Kidney (tissue), 22 donors: ENCODE measurements at regions of chr5 and their contacts with region 1.

Region 1: DNA sequence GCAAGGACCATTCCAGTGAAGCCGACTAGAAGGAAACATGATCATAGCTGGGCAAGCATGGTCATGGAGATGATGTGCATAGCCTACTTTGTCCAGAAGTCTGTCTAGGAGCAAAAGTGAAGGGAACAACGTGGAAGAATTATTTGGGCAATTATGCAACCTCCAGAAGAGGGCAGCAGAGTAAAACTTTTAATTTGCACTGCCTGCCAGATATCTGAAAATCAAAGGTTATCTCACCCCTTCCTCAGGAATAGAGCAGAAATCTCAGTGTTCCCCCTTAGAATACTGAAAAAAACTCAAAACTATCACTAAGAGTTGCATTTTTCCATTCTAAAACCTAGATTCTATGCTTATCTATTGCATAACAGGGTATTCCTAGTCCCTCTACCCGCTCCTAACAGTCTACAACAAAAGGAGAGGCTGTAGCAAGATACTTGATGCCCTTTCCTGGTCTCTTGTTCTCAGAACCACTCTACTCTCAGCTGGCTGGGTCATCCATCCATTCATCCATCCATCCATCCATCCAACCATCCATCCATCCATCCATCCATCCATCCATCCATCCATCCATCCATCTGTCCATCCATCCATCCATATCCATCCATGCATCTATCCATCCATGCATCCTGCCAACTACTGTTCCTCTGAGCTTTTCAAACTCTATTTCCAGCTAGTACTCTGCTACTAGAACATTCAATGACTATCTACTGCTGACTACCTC is 8.4 kb upstream of the SETD9 start:
- DNase-seq: peak in 3 of 5 donors; percentile 26 to 67 (median 54)
- H3K4me3 ChIP-seq: no peak overlapping the region
- H3K27ac ChIP-seq: no peak overlapping the region
- H3K4me1 ChIP-seq: no peaks in the 10 kb centered on the region
- H3K27me3 ChIP-seq: no peaks in the 10 kb centered on the region
- CTCF ChIP-seq: peak; percentile 73

Region 2: DNA sequence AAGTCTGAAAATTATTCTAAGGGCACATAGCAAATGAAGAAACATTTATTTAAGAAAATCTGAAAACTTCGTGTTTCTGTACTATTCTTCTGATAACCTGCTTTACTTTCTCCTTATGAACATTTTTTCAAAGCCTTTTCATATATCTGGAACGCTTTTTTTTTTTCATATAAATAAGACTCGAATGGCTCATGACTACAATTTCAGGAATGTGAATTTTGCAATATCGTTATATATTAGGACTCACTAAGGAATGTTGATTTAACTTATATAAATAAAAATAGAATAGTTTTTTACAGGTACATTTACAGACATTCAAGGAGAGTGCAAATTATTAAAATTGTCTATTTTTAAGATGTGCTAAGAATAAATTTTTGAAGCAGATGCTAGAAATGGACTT is 315.7 kb after region 1 on chr5:
- intact Hi-C with region 1: loop called (anchors 5 kb)
- DNase-seq: no peak
- H3K4me3 ChIP-seq: no peak overlapping the region
- H3K27ac ChIP-seq: no peak overlapping the region
- H3K4me1 ChIP-seq: no peaks in the 10 kb centered on the region
- H3K27me3 ChIP-seq: no peaks in the 10 kb centered on the region
- CTCF ChIP-seq: no peak

Region 3: DNA sequence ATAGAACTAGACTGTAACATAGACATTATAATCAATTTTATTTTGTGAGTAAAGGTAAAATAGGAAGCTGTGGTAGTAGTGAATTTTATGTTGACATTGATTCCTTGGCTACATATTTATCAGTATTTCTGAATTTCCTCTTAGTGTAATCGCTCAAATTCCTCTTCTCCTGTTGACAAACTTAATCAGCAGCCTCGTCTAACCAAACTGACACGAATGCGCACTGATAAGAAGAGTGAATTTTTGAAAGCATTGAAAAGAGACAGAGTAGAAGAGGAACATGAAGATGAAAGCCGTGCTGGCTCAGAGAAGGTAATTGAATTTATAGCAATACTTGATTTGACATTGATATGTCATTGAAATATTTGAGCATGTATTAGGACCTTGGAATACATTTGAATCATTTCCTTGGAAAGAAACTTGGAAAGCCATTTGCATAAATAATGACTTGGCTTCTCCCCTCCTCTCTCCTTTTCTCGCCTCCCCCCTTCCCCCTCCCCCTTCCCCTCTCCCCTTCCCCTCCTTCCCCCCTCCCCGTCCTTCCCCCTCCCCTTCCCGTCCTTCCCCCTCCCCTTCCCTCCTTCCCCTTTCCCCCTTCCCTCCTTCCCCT is 348.4 kb after region 1 on chr5:
- intact Hi-C with region 1: no loop called
- DNase-seq: no peak
- H3K4me3 ChIP-seq: no peak overlapping the region
- H3K27ac ChIP-seq: no peak overlapping the region
- H3K4me1 ChIP-seq: no peaks in the 10 kb centered on the region
- H3K27me3 ChIP-seq: no peaks in the 10 kb centered on the region
- CTCF ChIP-seq: no peak